PC-9 (cell line): ENCODE measurements at regions of chr2 and their contacts with region 1.

Region 1: DNA sequence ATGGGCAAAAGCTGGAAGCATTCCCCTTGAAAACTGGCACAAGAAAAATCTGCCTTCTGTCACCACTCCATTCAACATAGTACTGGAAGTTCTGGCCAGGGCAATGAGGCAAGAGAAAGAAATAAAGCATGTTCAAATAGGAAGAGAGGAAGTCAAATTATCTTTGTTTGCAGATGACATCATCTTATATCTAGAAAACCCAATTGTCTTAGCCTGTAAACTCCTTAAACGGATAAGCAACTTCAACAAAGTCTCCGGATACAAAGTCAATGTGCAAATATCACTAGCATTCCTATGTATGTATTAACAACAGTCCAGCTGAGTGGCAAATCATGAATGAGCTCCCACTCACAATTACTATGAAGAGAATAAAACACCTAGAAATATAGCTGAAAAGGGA is 1579.3 kb downstream of the SUCLG1 start:
- DNase-seq: no peak
- H3K4me3 ChIP-seq: no peak overlapping the region
- H3K27ac ChIP-seq: no peak overlapping the region
- H3K4me1 ChIP-seq: no peaks in the 10 kb centered on the region
- H3K27me3 ChIP-seq: no peaks in the 10 kb centered on the region
- CTCF ChIP-seq: no peak

Region 2: GRCh38 chr2:83584672-83585071 is 704.9 kb after region 1 on chr2:
- CTCF ChIA-PET with region 1: interaction called, 16 read pairs
- POLR2A ChIA-PET with region 1: no interaction called
- intact Hi-C with region 1: no loop called
- DNase-seq: no peak
- H3K4me3 ChIP-seq: no peak overlapping the region
- H3K27ac ChIP-seq: no peak overlapping the region
- H3K4me1 ChIP-seq: no peaks in the 10 kb centered on the region
- H3K27me3 ChIP-seq: no peaks in the 10 kb centered on the region
- CTCF ChIP-seq: no peak